ENCODE measurements at regions of chr5 and their contacts with region 1.

Region 1: GRCh38 chr5:5492087-5492933 is 69.8 kb downstream of the ICE1 start:
- DNase-seq: peak in 7 of 9 donors; percentile 40 to 67 (median 62)
- ATAC-seq: peak; percentile 57
- H3K4me3 ChIP-seq: no peak overlapping the region
- H3K4me3 Mint-ChIP-seq: peak overlapping the region; percentile 60 to 77 (median 68)
- H3K27ac ChIP-seq: no peak overlapping the region
- H3K27ac Mint-ChIP-seq: peak overlapping the region in 6 of 9 donors; percentile 6 to 56 (median 38)
- H3K4me1 ChIP-seq: peaks cover 0 to 7% of the 10 kb centered on the region in 2 donors
- H3K4me1 Mint-ChIP-seq: peaks cover 5 to 43% (median 32%) of the 10 kb centered on the region in 7 donors
- H3K27me3 ChIP-seq: no peaks in the 10 kb centered on the region
- H3K27me3 Mint-ChIP-seq: peaks cover 0 to 20% (median 0%) of the 10 kb centered on the region in 5 donors

Region 2: GRCh38 chr5:5523066-5523505 is 30.8 kb after region 1 on chr5:
- CTCF ChIA-PET with region 1: no interaction called
- POLR2A ChIA-PET with region 1: no interaction called
- intact Hi-C with region 1: loop called in 1 of 2 experiments (anchors 1 kb)
- DNase-seq: peak in 7 of 9 donors; percentile 31 to 58 (median 50)
- ATAC-seq: peak; percentile 75
- H3K4me3 ChIP-seq: peak overlapping the region; percentile 48
- H3K4me3 Mint-ChIP-seq: peak overlapping the region in 9 of 10 donors; percentile 43 to 83 (median 70)
- H3K27ac ChIP-seq: no peak overlapping the region
- H3K27ac Mint-ChIP-seq: peak overlapping the region; percentile 0 to 90 (median 75)
- H3K4me1 ChIP-seq: peaks cover 0 to 3% of the 10 kb centered on the region in 2 donors
- H3K4me1 Mint-ChIP-seq: peaks cover 1 to 25% (median 17%) of the 10 kb centered on the region in 7 donors
- H3K27me3 ChIP-seq: no peaks in the 10 kb centered on the region
- H3K27me3 Mint-ChIP-seq: peaks cover 0 to 3% (median 0%) of the 10 kb centered on the region in 5 donors

Region 3: DNA sequence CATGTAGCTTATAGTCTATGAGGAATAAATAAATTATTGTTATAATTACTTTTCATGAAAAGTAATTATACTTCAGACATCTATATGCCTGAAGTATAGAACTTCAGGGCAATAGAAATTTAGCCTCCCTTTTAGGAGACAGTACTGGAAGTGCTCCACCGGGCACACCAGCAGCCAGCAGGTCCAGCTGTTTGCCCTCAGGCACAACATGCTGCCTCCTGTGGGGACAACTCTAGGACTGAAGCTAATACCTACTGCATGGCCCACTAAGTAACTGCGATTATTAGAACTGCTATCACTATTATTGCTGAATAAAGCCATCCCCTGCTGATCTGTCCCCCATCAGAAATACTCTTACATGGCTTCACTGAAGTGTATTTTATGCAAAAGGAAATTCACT is 556.4 kb after region 1 on chr5:
- CTCF ChIA-PET with region 1: no interaction called
- POLR2A ChIA-PET with region 1: no interaction called
- intact Hi-C with region 1: no loop called
- DNase-seq: no peak
- ATAC-seq: no peak
- H3K4me3 ChIP-seq: no peak overlapping the region
- H3K4me3 Mint-ChIP-seq: no peak overlapping the region
- H3K27ac ChIP-seq: no peak overlapping the region
- H3K27ac Mint-ChIP-seq: no peak overlapping the region
- H3K4me1 ChIP-seq: no peaks in the 10 kb centered on the region
- H3K4me1 Mint-ChIP-seq: no peaks in the 10 kb centered on the region
- H3K27me3 ChIP-seq: no peaks in the 10 kb centered on the region
- H3K27me3 Mint-ChIP-seq: peaks cover 0 to 24% (median 4%) of the 10 kb centered on the region in 5 donors

Region 4: GRCh38 chr5:6291961-6292360 is 799.7 kb after region 1 on chr5:
- CTCF ChIA-PET with region 1: no interaction called
- POLR2A ChIA-PET with region 1: no interaction called
- intact Hi-C with region 1: loop called (anchors 1 to 5 kb)
- DNase-seq: peak in 6 of 9 donors; percentile 17 to 49 (median 28)
- ATAC-seq: no peak
- H3K4me3 ChIP-seq: no peak overlapping the region
- H3K4me3 Mint-ChIP-seq: no peak overlapping the region
- H3K27ac ChIP-seq: no peak overlapping the region
- H3K27ac Mint-ChIP-seq: no peak overlapping the region
- H3K4me1 ChIP-seq: no peaks in the 10 kb centered on the region
- H3K4me1 Mint-ChIP-seq: no peaks in the 10 kb centered on the region
- H3K27me3 ChIP-seq: no peaks in the 10 kb centered on the region
- H3K27me3 Mint-ChIP-seq: peaks cover 0 to 20% (median 7%) of the 10 kb centered on the region in 5 donors

Region 5: GRCh38 chr5:6435356-6435755 is 943.0 kb after region 1 on chr5:
- CTCF ChIA-PET with region 1: no interaction called
- POLR2A ChIA-PET with region 1: no interaction called
- intact Hi-C with region 1: loop called in 1 of 2 experiments (anchors 2 kb)
- DNase-seq: no peak
- ATAC-seq: no peak
- H3K4me3 ChIP-seq: no peak overlapping the region
- H3K4me3 Mint-ChIP-seq: no peak overlapping the region
- H3K27ac ChIP-seq: no peak overlapping the region
- H3K27ac Mint-ChIP-seq: no peak overlapping the region
- H3K4me1 ChIP-seq: no peaks in the 10 kb centered on the region
- H3K4me1 Mint-ChIP-seq: peaks cover 0 to 5% (median 0%) of the 10 kb centered on the region in 7 donors
- H3K27me3 ChIP-seq: peaks cover 4% of the 10 kb centered on the region in 2 donors
- H3K27me3 Mint-ChIP-seq: peaks cover 27 to 37% (median 32%) of the 10 kb centered on the region in 5 donors

Region 6: GRCh38 chr5:6632917-6633468 is 1140.7 kb after region 1 on chr5 and contains the starts of genes NSUN2 and SRD5A1:
- CTCF ChIA-PET with region 1: no interaction called
- POLR2A ChIA-PET with region 1: no interaction called
- intact Hi-C with region 1: loop called (anchors 1 to 2 kb)
- DNase-seq: peak; percentile 88 to 98 (median 94)
- ATAC-seq: peak; percentile 94
- H3K4me3 ChIP-seq: peak within 1 kb of the TSS; percentile 92
- H3K4me3 Mint-ChIP-seq: peak within 1 kb of the TSS; percentile 89 to 98 (median 95)
- H3K27ac ChIP-seq: peak within 1 kb of the TSS; percentile 83
- H3K27ac Mint-ChIP-seq: peak within 1 kb of the TSS; percentile 87 to 99 (median 96)
- H3K4me1 ChIP-seq: peaks cover 15 to 22% of the 10 kb centered on the region in 2 donors
- H3K4me1 Mint-ChIP-seq: peaks cover 30 to 55% (median 47%) of the 10 kb centered on the region in 7 donors
- H3K27me3 ChIP-seq: no peaks in the 10 kb centered on the region
- H3K27me3 Mint-ChIP-seq: no peaks in the 10 kb centered on the region
- total RNA-seq, gene NSUN2: 52.4 to 87.2 (median 72.9) TPM
- total RNA-seq, gene SRD5A1: 3.4 to 11.9 (median 6.6) TPM

Region 7: DNA sequence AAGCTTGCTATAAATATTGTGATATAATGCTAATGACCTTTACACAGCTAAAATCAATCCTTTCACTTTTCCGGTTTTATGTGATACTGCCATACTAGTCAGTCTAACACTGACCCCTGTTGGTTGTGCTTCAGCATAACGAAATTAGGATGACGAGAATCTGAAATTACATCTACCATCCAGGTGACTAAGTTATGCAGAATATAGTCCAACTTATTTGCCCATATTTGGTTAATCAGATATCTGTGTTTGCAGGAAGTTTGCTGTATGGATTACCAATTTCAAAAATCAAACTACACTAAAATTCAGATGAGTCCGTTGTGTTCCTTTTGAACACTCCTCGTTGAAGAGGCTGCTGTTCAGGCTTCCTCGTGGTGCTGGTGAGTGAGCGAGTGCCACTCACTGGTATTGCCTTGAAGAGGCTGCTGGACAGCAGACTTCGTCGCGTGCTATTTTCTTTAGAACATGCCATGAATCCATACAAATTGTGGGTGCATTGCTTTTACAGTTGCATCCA is 1253.5 kb after region 1 on chr5:
- CTCF ChIA-PET with region 1: interaction called, 3 read pairs
- POLR2A ChIA-PET with region 1: no interaction called
- intact Hi-C with region 1: loop called (anchors 1 to 10 kb)
- DNase-seq: peak in 7 of 9 donors; percentile 33 to 62 (median 53)
- ATAC-seq: peak; percentile 85
- H3K4me3 ChIP-seq: no peak overlapping the region
- H3K4me3 Mint-ChIP-seq: no peak overlapping the region
- H3K27ac ChIP-seq: no peak overlapping the region
- H3K27ac Mint-ChIP-seq: peak overlapping the region in 3 of 9 donors; percentile 4 to 48 (median 36)
- H3K4me1 ChIP-seq: no peaks in the 10 kb centered on the region
- H3K4me1 Mint-ChIP-seq: peaks cover 2 to 10% (median 6%) of the 10 kb centered on the region in 7 donors
- H3K27me3 ChIP-seq: no peaks in the 10 kb centered on the region
- H3K27me3 Mint-ChIP-seq: no peaks in the 10 kb centered on the region

Measured in naive thymus-derived CD4-positive, alpha-beta T cell (primary cell).